ENCODE measurements at regions of chrX and their contacts with region 1.

Region 1: GRCh38 chrX:22392133-22392948 is 119.6 kb downstream of the CBLL2 start:
- DNase-seq: no peak
- ATAC-seq: no peak

Region 2: DNA sequence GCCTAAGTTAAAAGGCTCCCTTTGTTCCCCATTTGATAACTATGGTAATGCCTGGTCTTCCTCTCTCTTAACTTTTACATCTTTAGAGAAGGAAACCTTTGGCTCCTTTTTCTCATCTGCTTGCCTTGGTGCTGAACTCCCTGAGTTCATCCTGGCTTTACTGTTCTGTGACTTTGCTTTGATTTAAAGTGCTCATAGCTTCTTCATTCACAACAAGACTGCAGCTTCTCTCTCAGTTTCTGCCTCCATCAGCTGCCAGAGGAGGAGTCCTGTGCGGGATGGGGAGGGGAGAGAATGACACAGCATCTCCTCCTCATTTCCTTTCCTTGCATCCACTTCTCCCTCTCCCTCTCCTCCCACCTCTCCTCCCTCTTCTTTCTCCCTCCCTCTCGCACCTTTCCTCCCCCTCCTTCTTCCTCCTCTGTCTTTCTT is 77.7 kb before region 1 on chrX:
- intact Hi-C with region 1: loop called (anchors 2 kb)
- DNase-seq: no peak
- ATAC-seq: no peak

Measured in sciatic nerve (tissue), 2 donors.